HepG2 (cell line): ENCODE measurements at regions of chr1 and their contacts with region 1.

Region 1: GRCh38 chr1:2194898-2195673 is 514 bp upstream of the FAAP20 start:
- DNase-seq: peak; percentile 84
- ATAC-seq: peak; percentile 76
- H3K4me3 ChIP-seq: peak overlapping the region; percentile 76 to 81 (median 80)
- H3K27ac ChIP-seq: peak overlapping the region; percentile 77
- H3K4me1 ChIP-seq: peaks cover 83% of the 10 kb centered on the region
- H3K27me3 ChIP-seq: no peaks in the 10 kb centered on the region
- CTCF ChIP-seq: peak; percentile 99
- EP300 ChIP-seq: 0 out of 4 replicates have a peak, but pooled peaks of 1 of the 2 experiments have one; percentile 26
- POLR2A ChIP-seq: no peak
- RAD21 ChIP-seq: peak; percentile 99

Region 2: GRCh38 chr1:1906185-1907097 is 288.6 kb before region 1 on chr1:
- CTCF ChIA-PET with region 1: no interaction called
- POLR2A ChIA-PET with region 1: no interaction called
- in situ Hi-C with region 1: no loop called
- intact Hi-C with region 1: no loop called
- DNase-seq: peak; percentile 79
- ATAC-seq: peak; percentile 84
- H3K4me3 ChIP-seq: no peak overlapping the region
- H3K27ac ChIP-seq: no peak overlapping the region
- H3K4me1 ChIP-seq: peaks cover 53% of the 10 kb centered on the region
- H3K27me3 ChIP-seq: peaks cover 0 to 11% of the 10 kb centered on the region in 2 experiments; a peak in 4 of 5 replicates
- CTCF ChIP-seq: peak; percentile 98
- EP300 ChIP-seq: no peak
- POLR2A ChIP-seq: no peak
- RAD21 ChIP-seq: peak; percentile 93

Region 3: GRCh38 chr1:2044510-2045319 is 150.4 kb before region 1 on chr1:
- CTCF ChIA-PET with region 1: no interaction called
- POLR2A ChIA-PET with region 1: no interaction called
- in situ Hi-C with region 1: no loop called
- intact Hi-C with region 1: no loop called
- DNase-seq: peak; percentile 33
- ATAC-seq: peak; percentile 5
- H3K4me3 ChIP-seq: peak overlapping the region in 2 of 3 experiments; percentile 30 to 58; a peak in 3 of 6 replicates
- H3K27ac ChIP-seq: no peak overlapping the region
- H3K4me1 ChIP-seq: peaks cover 66% of the 10 kb centered on the region
- H3K27me3 ChIP-seq: peaks cover 7 to 31% of the 10 kb centered on the region in 2 experiments
- CTCF ChIP-seq: peak; percentile 85
- EP300 ChIP-seq: no peak
- POLR2A ChIP-seq: no peak
- RAD21 ChIP-seq: peak; percentile 94

Region 4: DNA sequence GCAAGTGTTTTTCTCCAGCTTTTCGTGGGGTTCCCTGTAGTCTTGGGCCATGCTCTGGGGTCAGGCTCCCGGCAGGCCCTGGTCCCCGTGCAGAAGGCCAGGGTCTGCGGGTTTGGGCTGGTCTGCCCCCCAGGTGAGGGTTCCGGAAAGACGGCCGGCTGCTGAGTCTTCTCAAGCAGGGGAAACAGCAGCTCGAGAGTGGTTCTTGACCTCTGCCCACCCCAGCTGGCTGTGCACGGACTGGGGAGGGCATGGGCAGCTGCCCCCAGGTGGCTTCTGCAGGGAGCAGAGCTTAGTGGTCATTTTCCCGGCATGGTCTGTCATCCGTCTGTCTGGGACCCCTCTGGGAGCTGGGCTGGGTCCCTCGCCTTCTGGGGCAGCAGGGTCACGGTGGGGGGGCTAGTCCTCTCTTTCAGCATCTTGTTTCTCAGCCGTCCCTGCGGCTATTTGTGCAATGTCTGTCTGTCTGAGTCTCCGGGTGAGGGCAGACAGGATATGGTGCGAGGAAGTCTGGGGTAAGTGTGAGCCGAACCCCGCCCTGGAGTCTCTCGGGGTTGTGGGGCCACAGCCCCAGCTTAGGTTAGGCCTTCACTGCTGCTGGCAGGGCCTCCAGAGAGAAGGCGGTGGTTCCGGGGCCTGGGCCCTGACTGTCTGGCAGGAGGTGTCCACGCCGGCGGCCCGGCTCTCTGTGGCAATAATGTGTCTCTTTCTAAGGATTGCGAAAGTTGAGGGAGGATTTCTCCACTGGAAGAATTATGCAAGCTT is 39.1 kb after region 1 on chr1:
- CTCF ChIA-PET with region 1: no interaction called
- POLR2A ChIA-PET with region 1: interaction called, 21 read pairs
- in situ Hi-C with region 1: loop called (anchors 5 kb)
- intact Hi-C with region 1: loop called (anchors 5 kb)
- DNase-seq: peak; percentile 93
- ATAC-seq: peak; percentile 61
- H3K4me3 ChIP-seq: peak overlapping the region; percentile 74 to 96 (median 95)
- H3K27ac ChIP-seq: peak overlapping the region; percentile 81
- H3K4me1 ChIP-seq: peaks cover 69% of the 10 kb centered on the region
- H3K27me3 ChIP-seq: no peaks in the 10 kb centered on the region; a peak in 1 of 5 replicates
- CTCF ChIP-seq: peak; percentile 26; the same call in 1 of the 2 replicates
- EP300 ChIP-seq: peak; percentile 88 to 92
- POLR2A ChIP-seq: no peak
- RAD21 ChIP-seq: no peak

Region 5: GRCh38 chr1:2314803-2315673 is 120.0 kb after region 1 on chr1:
- CTCF ChIA-PET with region 1: no interaction called
- POLR2A ChIA-PET with region 1: interaction called, 8 read pairs
- in situ Hi-C with region 1: loop called (anchors 5 kb)
- intact Hi-C with region 1: no loop called
- DNase-seq: peak; percentile 21
- ATAC-seq: no peak
- H3K4me3 ChIP-seq: peak overlapping the region; percentile 55 to 78 (median 64); a peak in 5 of 6 replicates
- H3K27ac ChIP-seq: no peak overlapping the region
- H3K4me1 ChIP-seq: peaks cover 79% of the 10 kb centered on the region
- H3K27me3 ChIP-seq: peaks cover 4 to 23% of the 10 kb centered on the region in 2 experiments; a peak in 3 of 5 replicates
- CTCF ChIP-seq: peak; percentile 65
- EP300 ChIP-seq: no peak
- POLR2A ChIP-seq: no peak
- RAD21 ChIP-seq: no peak

Region 6: GRCh38 chr1:2381741-2382620 is 186.9 kb after region 1 on chr1:
- CTCF ChIA-PET with region 1: interaction called, 30 read pairs
- POLR2A ChIA-PET with region 1: interaction called, 20 read pairs
- in situ Hi-C with region 1: loop called (anchors 5 kb)
- intact Hi-C with region 1: loop called (anchors 1 kb)
- DNase-seq: peak; percentile 45
- ATAC-seq: peak; percentile 94
- H3K4me3 ChIP-seq: no peak overlapping the region
- H3K27ac ChIP-seq: no peak overlapping the region
- H3K4me1 ChIP-seq: peaks cover 30% of the 10 kb centered on the region
- H3K27me3 ChIP-seq: no peaks in the 10 kb centered on the region
- CTCF ChIP-seq: peak; percentile 98
- EP300 ChIP-seq: no peak
- POLR2A ChIP-seq: no peak
- RAD21 ChIP-seq: peak; percentile 93

Region 7: DNA sequence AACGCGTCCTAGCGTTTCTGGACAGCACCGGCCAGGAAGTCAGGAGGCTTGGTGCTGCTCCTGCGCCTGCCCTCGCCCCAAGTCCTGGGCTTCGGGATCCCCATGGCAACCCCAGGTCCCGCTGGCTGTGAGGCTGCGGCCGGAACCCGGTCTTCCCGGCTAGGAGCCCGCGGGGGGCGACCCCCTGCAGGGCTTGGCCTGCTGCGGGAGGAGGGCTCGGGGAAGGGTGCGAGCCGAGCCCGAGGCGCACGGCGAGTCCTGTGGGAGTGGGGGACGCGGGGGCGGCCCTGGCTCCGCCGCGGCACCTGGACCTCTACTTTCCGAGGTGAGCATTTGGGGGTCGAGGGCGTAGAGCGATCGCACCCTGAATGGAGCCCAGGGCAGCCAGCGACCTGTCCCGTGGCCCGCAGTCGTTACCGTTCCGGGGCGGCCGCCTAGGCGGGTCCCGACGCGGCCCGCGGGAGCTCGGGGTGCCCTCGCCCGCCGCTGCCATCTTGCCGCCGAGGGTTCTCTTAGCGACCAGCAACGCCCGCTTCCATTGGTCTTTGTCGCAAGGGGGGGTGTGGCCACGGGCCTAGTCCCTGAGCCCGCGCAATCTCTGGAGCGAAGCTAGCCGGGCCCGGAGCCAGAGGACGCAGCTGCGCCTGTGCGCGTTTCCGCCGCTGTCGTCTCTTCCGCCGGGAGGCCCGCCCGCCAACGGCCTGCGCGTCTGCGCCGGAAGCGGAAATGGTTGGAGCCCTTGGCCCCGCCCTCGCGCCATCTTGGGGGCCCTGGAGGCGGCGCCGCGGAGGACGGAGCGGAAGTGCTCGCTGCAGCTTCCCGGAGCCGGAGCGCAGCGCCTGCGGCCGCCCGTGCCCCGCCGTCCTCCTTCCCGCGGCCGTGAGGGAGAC is 196.2 kb after region 1 on chr1 and contains the starts of genes MORN1 and RER1:
- CTCF ChIA-PET with region 1: interaction called, 3 read pairs
- POLR2A ChIA-PET with region 1: interaction called, 14 read pairs
- in situ Hi-C with region 1: no loop called
- intact Hi-C with region 1: no loop called
- DNase-seq: peak; percentile 95
- ATAC-seq: peak; percentile 96
- H3K4me3 ChIP-seq: peak within 1 kb of the TSS; percentile 91 to 96 (median 94)
- H3K27ac ChIP-seq: peak within 1 kb of the TSS; percentile 54
- H3K4me1 ChIP-seq: peaks cover 34% of the 10 kb centered on the region
- H3K27me3 ChIP-seq: no peaks in the 10 kb centered on the region; a peak in 1 of 5 replicates
- CTCF ChIP-seq: no peak; the same call in 1 of the 2 replicates
- EP300 ChIP-seq: peak in 1 of 2 experiments; percentile 19; a peak in 1 of 4 replicates
- POLR2A ChIP-seq: peak in 1 of 2 experiments; percentile 65; a peak in 2 of 4 replicates
- RAD21 ChIP-seq: 0 out of 2 replicates have a peak, but pooled peaks have one; percentile 26
- total RNA-seq, gene MORN1: 3.9 and 6.5 TPM in 2 replicates
- total RNA-seq, gene RER1: 83.9 and 128 TPM in 2 replicates

Region 8: GRCh38 chr1:2525920-2526823 is 331.1 kb after region 1 on chr1 and contains the start of gene PANK4:
- CTCF ChIA-PET with region 1: no interaction called
- POLR2A ChIA-PET with region 1: no interaction called
- in situ Hi-C with region 1: loop called (anchors 25 kb)
- intact Hi-C with region 1: no loop called
- DNase-seq: peak; percentile 84
- ATAC-seq: peak; percentile 86
- H3K4me3 ChIP-seq: peak within 1 kb of the TSS; percentile 65 to 96 (median 69)
- H3K27ac ChIP-seq: peak within 1 kb of the TSS; percentile 49
- H3K4me1 ChIP-seq: peaks cover 66% of the 10 kb centered on the region
- H3K27me3 ChIP-seq: peaks cover 9 to 36% of the 10 kb centered on the region in 2 experiments
- CTCF ChIP-seq: no peak
- EP300 ChIP-seq: no peak
- POLR2A ChIP-seq: peak in 1 of 2 experiments; percentile 73; a peak in 2 of 4 replicates
- RAD21 ChIP-seq: peak; percentile 24; the same call in 1 of the 2 replicates
- total RNA-seq, gene PANK4: 9.2 and 19.3 TPM in 2 replicates